AG04450 (cell line): ENCODE measurements at regions of chr6 and their contacts with region 1.

Region 1: GRCh38 chr6:142474531-142475289 is 172.9 kb downstream of the ADGRG6 start:
- DNase-seq: peak; percentile 44
- H3K4me3 ChIP-seq: no peak overlapping the region
- H3K27ac ChIP-seq: no peak overlapping the region
- H3K27me3 ChIP-seq: no peaks in the 10 kb centered on the region
- CTCF ChIP-seq: peak; percentile 59

Region 2: GRCh38 chr6:142146828-142147662 is 327.7 kb before region 1 on chr6 and contains the starts of genes NMBR and VTA1:
- CTCF ChIA-PET with region 1: interaction called, 13 read pairs
- POLR2A ChIA-PET with region 1: no interaction called
- DNase-seq: peak; percentile 99
- H3K4me3 ChIP-seq: peak within 1 kb of the TSS; percentile 97
- H3K27ac ChIP-seq: peak within 1 kb of the TSS; percentile 3
- H3K27me3 ChIP-seq: no peaks in the 10 kb centered on the region
- CTCF ChIP-seq: peak; percentile 98
- polyA plus RNA-seq, gene NMBR: 0.15 TPM in 1 of 2 replicates, not detected in the other
- polyA plus RNA-seq, gene VTA1: 81.4 and 103 TPM in 2 replicates

Region 3: DNA sequence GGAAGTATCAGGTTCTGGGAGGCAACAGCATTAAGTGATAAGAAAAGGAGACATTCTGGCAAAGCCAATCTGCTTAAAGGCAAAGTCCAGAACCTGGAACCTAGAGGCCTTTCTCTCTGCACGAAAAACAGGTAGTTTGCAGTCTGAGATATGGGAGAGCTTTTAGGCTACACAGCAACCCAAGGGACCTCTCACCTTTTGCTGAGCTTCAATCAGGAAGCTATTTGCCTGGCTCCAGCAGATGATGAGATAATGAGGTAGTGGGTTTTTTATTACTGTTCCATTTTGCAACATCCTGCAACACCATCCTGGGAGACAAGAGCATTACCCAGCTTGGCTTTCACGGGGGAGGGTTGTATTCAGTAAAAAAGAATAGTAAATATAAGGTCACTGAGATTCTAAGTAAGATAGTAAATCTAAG is 29.8 kb before region 1 on chr6:
- CTCF ChIA-PET with region 1: interaction called, 13 read pairs
- POLR2A ChIA-PET with region 1: no interaction called
- DNase-seq: no peak
- H3K4me3 ChIP-seq: no peak overlapping the region
- H3K27ac ChIP-seq: no peak overlapping the region
- H3K27me3 ChIP-seq: no peaks in the 10 kb centered on the region
- CTCF ChIP-seq: no peak

Region 4: DNA sequence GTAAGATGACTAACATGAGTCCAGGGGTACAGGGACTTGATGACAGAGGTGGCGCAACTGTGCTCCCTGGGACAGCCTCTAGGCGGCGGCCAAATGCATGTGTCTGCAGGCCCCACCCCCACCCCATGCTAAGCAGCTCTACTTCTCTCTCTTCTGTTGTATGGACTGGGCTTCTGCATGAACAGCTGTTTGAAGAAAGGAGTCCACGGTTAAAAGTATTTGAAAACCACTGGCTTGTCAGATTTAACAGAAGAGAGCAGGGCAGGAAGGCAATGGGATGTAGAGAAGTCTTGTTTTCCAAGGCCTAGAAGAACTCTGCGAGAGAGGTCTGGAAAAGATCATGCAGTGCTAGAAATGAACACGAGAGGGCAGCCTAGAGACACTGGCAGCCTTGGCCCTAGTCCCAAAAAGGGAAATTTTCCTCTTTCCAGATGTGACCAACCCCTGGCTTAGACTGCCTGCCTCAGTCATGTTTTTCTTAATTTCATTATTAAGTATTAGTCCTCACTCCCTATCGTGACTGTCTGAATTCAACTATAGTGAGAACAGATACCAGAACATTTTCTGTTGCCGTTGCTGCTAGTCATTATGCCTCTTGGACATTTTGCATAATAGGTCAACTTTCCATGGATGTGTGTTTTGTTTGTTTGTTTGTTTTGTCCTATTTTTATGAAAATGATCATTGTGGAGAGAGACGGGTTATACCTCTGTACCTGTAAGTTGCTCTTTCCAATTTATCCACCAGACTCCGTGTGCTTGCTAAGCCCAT is 92.1 kb after region 1 on chr6:
- CTCF ChIA-PET with region 1: interaction called, 32 read pairs
- POLR2A ChIA-PET with region 1: no interaction called
- DNase-seq: peak; percentile 7
- H3K4me3 ChIP-seq: no peak overlapping the region
- H3K27ac ChIP-seq: no peak overlapping the region
- H3K27me3 ChIP-seq: no peaks in the 10 kb centered on the region
- CTCF ChIP-seq: peak; percentile 96

Region 5: DNA sequence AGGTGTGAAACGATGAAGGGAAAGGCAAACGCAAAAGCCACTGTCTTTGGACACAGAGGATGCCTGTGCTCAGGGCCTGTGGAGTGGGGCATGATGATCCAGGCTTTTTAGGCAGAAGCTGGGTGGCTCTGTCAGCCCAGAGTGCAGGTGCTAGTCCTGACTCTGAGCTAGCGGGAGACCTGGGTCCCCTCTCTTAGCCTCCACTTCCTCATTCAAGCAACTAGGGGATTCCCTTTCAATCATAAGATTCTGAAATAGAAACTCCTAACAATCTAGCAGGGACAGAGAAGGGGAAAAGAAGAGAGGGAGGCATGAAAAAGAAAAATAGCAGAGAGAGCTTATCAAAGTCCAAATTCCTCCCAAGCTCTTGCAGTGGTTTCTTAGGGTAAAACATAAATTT is 477.9 kb after region 1 on chr6:
- CTCF ChIA-PET with region 1: no interaction called
- POLR2A ChIA-PET with region 1: no interaction called
- DNase-seq: no peak
- H3K4me3 ChIP-seq: no peak overlapping the region
- H3K27ac ChIP-seq: no peak overlapping the region
- H3K27me3 ChIP-seq: no peaks in the 10 kb centered on the region
- CTCF ChIP-seq: no peak

Region 6: DNA sequence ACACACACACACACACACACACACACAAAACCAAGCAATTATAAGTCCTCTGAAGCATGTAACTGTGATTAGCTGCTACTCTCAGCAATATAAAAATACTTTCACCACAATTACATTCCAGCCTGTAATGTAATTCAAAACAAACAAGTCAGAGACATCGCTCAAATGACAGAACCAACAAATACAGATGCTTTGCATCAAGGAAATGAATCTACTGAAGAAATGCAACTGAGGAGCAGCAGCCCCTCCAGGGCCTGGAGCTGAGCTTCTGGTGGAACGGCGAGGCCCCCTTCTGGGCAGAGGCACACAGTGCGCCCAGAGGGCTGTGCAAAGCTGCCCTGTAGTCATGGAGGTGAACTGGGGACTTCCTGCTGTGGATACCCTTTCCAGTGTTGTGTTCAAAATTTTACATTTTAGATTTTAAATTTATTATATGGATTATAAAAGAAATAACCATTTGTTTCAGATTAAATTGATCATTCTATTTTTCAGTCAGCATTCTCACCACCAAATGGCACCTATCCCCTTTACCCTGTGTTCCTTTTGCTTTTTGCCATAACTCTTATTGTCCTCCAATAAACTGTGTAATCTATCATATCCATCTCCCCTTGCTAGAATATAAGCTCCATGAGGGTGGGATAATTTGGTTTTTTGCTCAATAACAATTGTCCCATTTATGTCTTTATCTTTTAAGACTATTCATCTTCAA is 952.6 kb after region 1 on chr6:
- CTCF ChIA-PET with region 1: interaction called, 70 read pairs
- POLR2A ChIA-PET with region 1: interaction called, 3 read pairs
- DNase-seq: peak; percentile 79
- H3K4me3 ChIP-seq: no peak overlapping the region
- H3K27ac ChIP-seq: no peak overlapping the region
- H3K27me3 ChIP-seq: no peaks in the 10 kb centered on the region
- CTCF ChIP-seq: peak; percentile 99